HepG2 (cell line): ENCODE measurements at regions of chr2 and their contacts with region 1.

Region 1: GRCh38 chr2:158006961-158007719 is 94.5 kb upstream of the UPP2 start:
- DNase-seq: no peak
- ATAC-seq: peak; percentile 66
- H3K4me3 ChIP-seq: no peak overlapping the region
- H3K27ac ChIP-seq: no peak overlapping the region
- H3K4me1 ChIP-seq: no peaks in the 10 kb centered on the region
- H3K27me3 ChIP-seq: peaks cover 0 to 14% of the 10 kb centered on the region in 2 experiments; a peak in 4 of 5 replicates
- CTCF ChIP-seq: no peak
- EP300 ChIP-seq: no peak
- POLR2A ChIP-seq: no peak
- RAD21 ChIP-seq: no peak

Region 2: DNA sequence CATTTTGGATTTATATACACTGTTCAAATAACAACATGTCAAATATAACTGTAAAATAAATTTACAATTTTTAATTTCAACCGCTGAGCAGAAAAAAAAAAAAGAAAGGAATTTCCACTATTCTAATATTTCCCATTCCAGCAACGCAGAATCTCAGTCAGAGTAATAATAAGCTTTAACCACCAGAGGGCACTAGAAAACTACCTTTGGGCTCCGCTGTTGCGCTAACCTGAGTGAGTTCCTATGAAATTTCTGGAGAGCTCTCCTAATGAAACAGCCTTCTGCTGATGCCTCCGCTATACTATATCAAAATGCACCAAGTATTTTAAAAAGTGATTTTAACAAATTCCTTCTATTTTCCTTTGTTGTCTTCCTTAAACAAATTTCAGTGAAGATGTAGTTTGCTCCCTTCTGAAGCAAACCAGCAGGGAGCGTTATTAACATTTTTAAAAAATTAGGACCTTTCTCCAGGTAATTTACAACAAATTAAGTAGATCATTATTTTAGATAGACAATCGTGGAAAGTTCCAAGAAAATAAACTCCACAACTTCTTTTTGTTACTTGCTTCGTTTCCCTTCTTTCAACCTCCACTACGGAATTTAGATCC is 704.5 kb before region 1 on chr2:
- CTCF ChIA-PET with region 1: interaction called, 3 read pairs
- POLR2A ChIA-PET with region 1: no interaction called
- in situ Hi-C with region 1: no loop called
- intact Hi-C with region 1: loop called (anchors 1 kb)
- DNase-seq: peak; percentile 56
- ATAC-seq: peak; percentile 94
- H3K4me3 ChIP-seq: no peak overlapping the region
- H3K27ac ChIP-seq: no peak overlapping the region
- H3K4me1 ChIP-seq: no peaks in the 10 kb centered on the region
- H3K27me3 ChIP-seq: peaks cover 0 to 16% of the 10 kb centered on the region in 2 experiments; a peak in 1 of 5 replicates
- CTCF ChIP-seq: peak; percentile 76
- EP300 ChIP-seq: no peak
- POLR2A ChIP-seq: no peak
- RAD21 ChIP-seq: peak; percentile 67; the same call in 1 of the 2 replicates

Region 3: GRCh38 chr2:157497638-157498314 is 509.4 kb before region 1 on chr2:
- CTCF ChIA-PET with region 1: interaction called, 31 read pairs
- POLR2A ChIA-PET with region 1: no interaction called
- in situ Hi-C with region 1: loop called (anchors 5 kb)
- intact Hi-C with region 1: loop called (anchors 1 kb)
- DNase-seq: peak; percentile 19
- ATAC-seq: peak; percentile 95
- H3K4me3 ChIP-seq: no peak overlapping the region
- H3K27ac ChIP-seq: no peak overlapping the region
- H3K4me1 ChIP-seq: no peaks in the 10 kb centered on the region
- H3K27me3 ChIP-seq: no peaks in the 10 kb centered on the region
- CTCF ChIP-seq: peak; percentile 84
- EP300 ChIP-seq: no peak
- POLR2A ChIP-seq: no peak
- RAD21 ChIP-seq: no peak; the same call in 1 of the 2 replicates

Region 4: GRCh38 chr2:157628477-157629415 is 378.4 kb before region 1 on chr2 and contains the start of gene ACVR1C:
- CTCF ChIA-PET with region 1: interaction called, 9 read pairs
- POLR2A ChIA-PET with region 1: no interaction called
- in situ Hi-C with region 1: no loop called
- intact Hi-C with region 1: loop called (anchors 2 kb)
- DNase-seq: peak; percentile 84
- ATAC-seq: peak; percentile 96
- H3K4me3 ChIP-seq: peak within 1 kb of the TSS; percentile 53 to 72 (median 60)
- H3K27ac ChIP-seq: no peak within 1 kb of the TSS
- H3K4me1 ChIP-seq: peaks cover 10% of the 10 kb centered on the region
- H3K27me3 ChIP-seq: peaks cover 0 to 26% of the 10 kb centered on the region in 2 experiments; a peak in 2 of 5 replicates
- CTCF ChIP-seq: peak; percentile 66
- EP300 ChIP-seq: 0 out of 4 replicates have a peak, but pooled peaks of 1 of the 2 experiments have one; percentile 7
- POLR2A ChIP-seq: no peak
- RAD21 ChIP-seq: peak; percentile 70
- total RNA-seq, gene ACVR1C: 0.59 and 1.0 TPM in 2 replicates

Region 5: GRCh38 chr2:157901325-157901724 is 105.8 kb before region 1 on chr2:
- CTCF ChIA-PET with region 1: no interaction called
- POLR2A ChIA-PET with region 1: no interaction called
- in situ Hi-C with region 1: no loop called
- intact Hi-C with region 1: loop called (anchors 5 kb)
- DNase-seq: no peak
- ATAC-seq: peak; percentile 63
- H3K4me3 ChIP-seq: no peak overlapping the region
- H3K27ac ChIP-seq: no peak overlapping the region
- H3K4me1 ChIP-seq: no peaks in the 10 kb centered on the region
- H3K27me3 ChIP-seq: peaks cover 0 to 13% of the 10 kb centered on the region in 2 experiments; a peak in 1 of 5 replicates
- CTCF ChIP-seq: peak; percentile 36; the same call in 1 of the 2 replicates
- EP300 ChIP-seq: no peak
- POLR2A ChIP-seq: no peak
- RAD21 ChIP-seq: no peak